ENCODE measurements at regions of chr1 and their contacts with region 1.

Region 1: DNA sequence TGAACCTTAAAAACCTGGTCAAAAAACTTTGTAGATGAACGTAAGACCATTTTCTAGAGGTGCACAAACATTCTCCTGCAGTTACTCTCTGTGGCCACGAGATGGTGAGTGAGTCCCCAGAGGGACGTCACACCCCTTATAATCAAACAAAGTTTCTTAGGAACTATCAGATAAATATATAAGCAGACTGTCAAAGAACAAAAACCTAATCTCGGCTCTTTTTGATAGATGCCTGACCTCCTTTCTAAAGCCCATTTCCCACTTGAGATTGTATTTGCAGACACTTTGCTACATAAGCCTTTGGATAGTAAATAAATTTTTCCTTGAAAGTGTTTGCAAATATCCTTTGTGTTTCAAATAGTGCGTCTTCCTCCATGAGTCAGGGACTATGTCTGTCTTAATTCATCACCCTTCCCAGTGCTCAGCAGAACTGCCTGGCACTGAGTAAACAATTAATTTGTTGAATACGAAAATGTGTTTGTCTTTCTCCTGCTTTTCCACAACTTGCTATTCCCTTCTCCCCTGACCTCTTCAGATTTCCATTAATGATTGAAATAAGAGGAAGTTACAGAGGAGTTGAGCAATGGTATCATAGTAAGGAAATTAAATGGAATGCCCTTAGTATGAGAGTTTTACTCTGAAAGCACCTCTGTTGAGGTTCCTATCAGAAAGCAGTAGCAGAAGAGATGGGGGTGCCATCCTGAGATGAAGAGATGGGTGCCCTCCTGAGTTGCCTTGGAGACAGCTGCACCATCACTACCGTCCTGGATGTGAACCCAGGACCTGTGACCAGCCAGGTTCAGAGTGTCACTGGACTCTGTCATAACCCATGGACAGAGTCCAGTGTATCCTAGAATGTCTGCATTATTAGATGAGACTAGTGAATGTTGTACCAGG is 57.8 kb upstream of the RAVER2 start:
- DNase-seq: no peak
- ATAC-seq: peak; percentile 61 to 86 (median 64)
- H3K4me3 ChIP-seq: no peak overlapping the region
- H3K27ac ChIP-seq: no peak overlapping the region
- H3K4me1 ChIP-seq: no peaks in the 10 kb centered on the region
- H3K27me3 ChIP-seq: no peaks in the 10 kb centered on the region
- CTCF ChIP-seq: peak; percentile 94

Region 2: DNA sequence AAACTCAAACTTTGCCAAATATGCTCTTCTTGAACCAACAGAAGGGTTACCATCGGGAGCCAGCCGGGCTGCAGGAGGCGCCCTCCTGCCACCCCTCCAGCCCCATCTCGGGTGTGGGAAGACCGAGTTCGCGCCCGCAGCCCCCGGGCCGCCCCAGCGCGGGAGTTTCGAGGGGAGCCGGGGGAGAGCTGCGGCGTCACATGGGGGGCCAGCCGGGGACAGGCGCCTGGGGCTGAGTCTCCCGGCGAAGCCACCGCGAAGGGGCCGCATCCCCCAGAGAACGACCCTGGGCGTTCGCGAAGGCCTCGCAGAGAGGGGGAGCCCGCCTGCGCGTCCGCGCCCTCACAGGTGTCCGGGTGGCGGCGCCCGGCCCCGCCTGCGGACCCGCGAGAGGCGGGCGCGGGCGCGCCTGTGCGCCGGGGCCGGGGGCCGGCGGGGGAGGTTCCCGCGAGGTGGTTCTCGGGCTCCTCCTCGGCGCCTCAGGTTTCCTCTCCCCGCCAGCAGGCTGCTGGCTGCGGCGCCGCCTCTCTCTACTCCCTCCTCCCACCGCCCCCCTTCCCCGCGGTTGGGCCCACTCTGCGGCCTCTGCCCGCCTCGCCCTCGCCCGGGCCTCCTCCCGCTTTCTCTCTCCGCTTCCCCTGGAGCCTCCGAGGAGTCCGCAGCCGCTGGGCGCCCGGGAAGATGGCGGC is 57.6 kb after region 1 on chr1 and contains the start of gene RAVER2:
- intact Hi-C with region 1: loop called in 1 of 2 experiments (anchors 5 kb)
- DNase-seq: peak; percentile 77 to 82
- ATAC-seq: peak; percentile 77 to 81 (median 80)
- H3K4me3 ChIP-seq: peak within 1 kb of the TSS; percentile 94
- H3K27ac ChIP-seq: peak within 1 kb of the TSS; percentile 83
- H3K4me1 ChIP-seq: peaks cover 25% of the 10 kb centered on the region
- H3K27me3 ChIP-seq: no peaks in the 10 kb centered on the region
- CTCF ChIP-seq: peak; percentile 32
- total RNA-seq, gene RAVER2: 6.7 to 12.3 (median 10.2) TPM

Region 3: DNA sequence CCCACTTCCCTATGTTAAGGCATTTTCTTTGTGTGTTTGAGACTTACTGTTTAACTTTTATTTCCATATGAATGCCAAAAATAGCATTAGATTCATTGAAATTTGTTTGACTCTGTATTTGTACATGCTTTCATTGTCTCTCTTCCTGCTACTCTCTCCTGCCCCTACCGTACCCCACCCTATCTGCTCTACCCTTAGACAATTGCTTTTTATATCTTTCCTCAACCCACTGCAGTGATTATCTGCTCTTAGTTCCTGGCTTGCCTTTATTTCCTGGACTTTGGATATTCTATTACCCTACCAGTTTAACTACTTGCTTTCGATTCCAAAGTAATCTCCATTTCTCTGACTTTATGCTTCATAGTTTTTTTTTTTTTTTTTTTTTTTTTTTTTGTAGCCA is 68.3 kb after region 1 on chr1:
- intact Hi-C with region 1: no loop called
- DNase-seq: no peak
- ATAC-seq: no peak
- H3K4me3 ChIP-seq: no peak overlapping the region
- H3K27ac ChIP-seq: no peak overlapping the region
- H3K4me1 ChIP-seq: peaks cover 6% of the 10 kb centered on the region
- H3K27me3 ChIP-seq: no peaks in the 10 kb centered on the region
- CTCF ChIP-seq: no peak

Region 4: DNA sequence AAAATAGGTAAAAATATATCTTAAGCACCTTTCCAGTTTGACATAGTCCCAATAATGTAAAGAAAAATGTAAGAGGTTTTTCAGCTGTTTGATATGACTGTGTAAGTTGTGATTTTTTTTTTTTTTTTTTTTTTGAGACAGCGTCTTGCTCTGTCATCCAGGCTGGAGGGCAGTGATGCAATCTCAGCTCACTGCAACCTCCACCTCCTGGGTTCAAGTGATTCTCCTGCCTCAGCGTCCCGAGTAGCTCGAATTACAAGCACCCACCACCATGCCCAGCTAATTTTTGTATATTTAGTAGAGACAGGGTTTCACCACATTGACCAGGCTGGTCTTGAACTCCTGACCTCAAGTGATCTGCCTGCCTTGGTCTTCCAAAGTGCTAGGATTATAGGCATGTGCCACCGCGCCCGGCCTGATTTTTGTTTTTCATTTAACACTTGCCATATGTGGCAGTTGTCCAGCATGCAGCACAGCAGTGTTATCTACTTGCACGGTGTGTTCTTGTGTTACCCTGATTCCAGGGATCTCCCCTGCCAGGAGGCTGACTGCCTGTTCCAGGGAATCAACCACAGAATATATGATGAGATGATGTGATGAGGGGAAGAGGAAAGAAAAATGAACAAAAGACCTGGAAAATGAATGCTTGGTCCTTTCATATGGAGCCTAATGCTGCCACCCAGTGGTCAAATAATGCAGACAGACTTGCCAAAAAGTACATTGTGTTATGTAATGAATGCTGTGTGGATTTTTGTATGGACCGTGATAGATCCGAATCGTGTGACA is 136.8 kb after region 1 on chr1:
- intact Hi-C with region 1: loop called (anchors 2 to 5 kb)
- DNase-seq: no peak
- ATAC-seq: peak; percentile 49 to 89 (median 74)
- H3K4me3 ChIP-seq: no peak overlapping the region
- H3K27ac ChIP-seq: no peak overlapping the region
- H3K4me1 ChIP-seq: no peaks in the 10 kb centered on the region
- H3K27me3 ChIP-seq: no peaks in the 10 kb centered on the region
- CTCF ChIP-seq: peak; percentile 87

Region 5: GRCh38 chr1:65681096-65681495 is 994.0 kb after region 1 on chr1:
- intact Hi-C with region 1: loop called in 1 of 2 experiments (anchors 5 kb)
- DNase-seq: no peak
- ATAC-seq: no peak
- H3K4me3 ChIP-seq: no peak overlapping the region
- H3K27ac ChIP-seq: no peak overlapping the region
- H3K4me1 ChIP-seq: no peaks in the 10 kb centered on the region
- H3K27me3 ChIP-seq: no peaks in the 10 kb centered on the region
- CTCF ChIP-seq: no peak

Measured in psoas muscle (tissue), 8 donors.